GM23248 (cell line): ENCODE measurements at regions of chr17 and their contacts with region 1.

Region 1: DNA sequence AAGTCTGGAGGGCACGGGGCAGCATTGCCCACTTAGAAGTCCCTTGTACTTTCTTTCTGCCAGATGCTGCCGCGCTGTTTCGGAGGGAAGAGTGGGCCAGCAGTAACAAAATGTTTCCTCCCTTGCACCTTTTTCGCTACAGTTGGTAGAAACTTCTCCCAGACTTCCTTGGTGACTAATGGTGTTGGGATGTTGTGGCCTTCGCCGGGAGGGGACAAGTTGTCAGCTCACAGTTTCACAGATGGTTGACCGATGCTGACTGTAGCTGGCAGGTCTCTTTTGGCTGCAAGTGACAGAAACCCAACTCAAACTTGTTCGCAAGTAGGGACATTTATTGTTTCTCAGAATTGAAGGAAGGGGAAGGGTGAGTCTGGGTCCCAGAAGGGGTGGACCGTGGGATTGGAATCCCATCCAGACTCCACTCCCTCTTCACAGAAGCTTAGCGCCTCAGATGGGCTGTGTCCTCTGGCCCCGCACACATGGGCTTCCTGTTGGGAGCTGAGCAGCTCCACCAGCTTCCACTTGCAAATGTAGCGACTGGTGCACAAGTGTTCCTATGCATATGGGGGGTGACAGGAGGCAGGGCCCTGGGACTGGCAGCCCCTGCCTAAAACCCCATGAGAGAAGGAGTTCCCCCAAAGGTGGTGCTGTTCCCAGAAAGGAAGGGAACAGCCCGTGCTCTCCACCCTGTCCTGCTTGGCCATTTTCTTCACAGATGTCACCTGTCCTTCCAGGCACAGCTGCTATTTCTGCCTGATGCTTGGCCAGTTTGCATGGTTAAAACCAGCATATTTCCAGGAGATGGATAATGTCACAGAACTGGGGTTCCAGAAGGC is 30.9 kb upstream of the RPRML start:
- DNase-seq: no peak
- H3K4me3 ChIP-seq: no peak overlapping the region
- H3K27ac ChIP-seq: no peak overlapping the region
- H3K4me1 ChIP-seq: no peaks in the 10 kb centered on the region
- H3K27me3 ChIP-seq: no peaks in the 10 kb centered on the region

Region 2: GRCh38 chr17:47066841-47067682 is 57.1 kb after region 1 on chr17:
- in situ Hi-C with region 1: loop called (anchors 10 kb)
- DNase-seq: peak; percentile 94
- H3K4me3 ChIP-seq: peak overlapping the region; percentile 99
- H3K27ac ChIP-seq: peak overlapping the region; percentile 71
- H3K4me1 ChIP-seq: peaks cover 14% of the 10 kb centered on the region
- H3K27me3 ChIP-seq: no peaks in the 10 kb centered on the region